ENCODE measurements at regions of chr2 and their contacts with region 1.

Region 1: GRCh38 chr2:217785544-217786045 is 217.2 kb downstream of the TNS1 start:
- DNase-seq: peak; percentile 53 to 96
- H3K4me3 ChIP-seq: no peak overlapping the region
- H3K27ac ChIP-seq: no peak overlapping the region
- H3K4me1 ChIP-seq: peaks cover 0 to 2% (median 0%) of the 10 kb centered on the region in 4 experiments; a peak in 1 of 7 replicates
- H3K27me3 ChIP-seq: no peaks in the 10 kb centered on the region; a peak in 1 of 7 replicates
- CTCF ChIP-seq: peak; percentile 93 to 98 (median 96)
- EP300 ChIP-seq: no peak
- POLR2A ChIP-seq: no peak
- RAD21 ChIP-seq: peak; percentile 98 to 100

Region 2: GRCh38 chr2:217822296-217823252 is 37.0 kb after region 1 on chr2:
- CTCF ChIA-PET with region 1: interaction called, 155 read pairs
- POLR2A ChIA-PET with region 1: no interaction called
- DNase-seq: no peak
- H3K4me3 ChIP-seq: no peak overlapping the region
- H3K27ac ChIP-seq: no peak overlapping the region
- H3K4me1 ChIP-seq: peaks cover 0 to 3% (median under 1%) of the 10 kb centered on the region in 4 experiments; a peak in 1 of 7 replicates
- H3K27me3 ChIP-seq: no peaks in the 10 kb centered on the region
- CTCF ChIP-seq: peak; percentile 36 to 45 (median 40)
- EP300 ChIP-seq: no peak
- POLR2A ChIP-seq: no peak
- RAD21 ChIP-seq: no peak; a peak in 1 of 4 replicates

Region 3: DNA sequence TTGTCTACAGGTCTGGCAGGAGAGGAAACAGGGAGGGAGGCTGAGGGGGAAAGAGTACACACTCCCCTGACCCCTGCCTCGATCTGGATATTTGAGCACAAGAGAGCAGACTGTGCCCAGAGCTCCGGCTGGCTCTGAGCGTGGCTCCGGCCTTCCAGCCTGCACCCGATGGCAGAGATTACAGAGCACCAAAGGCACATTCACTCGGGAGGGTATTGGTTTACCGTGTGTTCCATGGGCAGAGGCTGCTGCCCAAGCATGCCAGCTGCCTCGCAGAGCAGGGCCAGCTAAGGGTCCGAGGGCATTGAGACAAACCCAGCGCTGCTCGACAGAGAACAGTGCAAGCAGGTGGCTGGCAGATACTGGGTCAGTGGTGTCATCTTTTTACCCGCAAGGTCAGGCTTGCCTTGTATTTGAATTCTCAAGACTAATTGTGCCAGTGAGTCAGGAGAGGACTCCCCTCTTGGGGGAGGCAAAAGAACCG is 85.0 kb after region 1 on chr2:
- CTCF ChIA-PET with region 1: interaction called, 759 read pairs
- POLR2A ChIA-PET with region 1: no interaction called
- DNase-seq: no peak
- H3K4me3 ChIP-seq: no peak overlapping the region
- H3K27ac ChIP-seq: no peak overlapping the region
- H3K4me1 ChIP-seq: peaks cover 0 to 5% (median 1%) of the 10 kb centered on the region in 4 experiments; a peak in 4 of 7 replicates
- H3K27me3 ChIP-seq: no peaks in the 10 kb centered on the region
- CTCF ChIP-seq: no peak
- EP300 ChIP-seq: no peak
- POLR2A ChIP-seq: no peak
- RAD21 ChIP-seq: no peak

Region 4: DNA sequence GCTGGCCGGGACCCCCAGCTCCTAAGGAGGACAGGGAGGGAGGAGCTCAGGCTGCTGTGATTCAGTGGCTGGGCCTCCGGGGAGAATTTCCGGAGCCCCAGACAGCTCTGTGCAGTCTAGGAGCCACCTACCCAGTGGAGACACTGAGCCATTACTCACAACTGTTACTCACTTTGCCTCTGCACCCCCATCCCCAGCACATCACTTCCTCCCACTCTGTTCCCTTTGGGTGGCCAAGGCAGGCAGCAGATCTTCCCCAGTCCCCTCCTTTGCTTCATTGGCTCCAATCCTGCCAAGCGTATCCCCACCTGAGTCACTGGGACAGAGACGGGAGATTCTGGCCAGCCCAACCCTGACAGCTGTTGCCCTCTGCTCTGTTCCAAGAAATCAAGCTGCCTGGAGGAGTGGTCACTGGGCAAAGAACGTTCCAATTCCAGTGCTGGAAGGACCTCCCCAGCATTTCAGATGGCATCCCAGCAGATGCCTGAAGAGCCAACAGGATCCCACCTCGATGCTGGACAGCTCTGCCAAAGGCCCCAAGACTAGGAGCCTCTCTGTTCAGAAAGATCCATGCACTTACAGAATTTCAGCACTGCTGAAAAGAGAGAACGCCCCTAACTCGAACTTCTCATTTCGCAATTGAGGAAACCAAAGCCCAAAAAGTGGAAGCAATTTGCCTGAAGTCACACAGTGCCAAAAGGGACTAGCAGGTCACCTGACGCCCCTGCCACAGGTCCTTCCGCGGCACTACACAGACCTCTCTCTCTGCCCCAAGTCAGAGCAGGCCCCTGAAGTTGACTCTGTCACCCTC is 148.9 kb after region 1 on chr2:
- CTCF ChIA-PET with region 1: interaction called, 15 read pairs
- POLR2A ChIA-PET with region 1: no interaction called
- DNase-seq: no peak
- H3K4me3 ChIP-seq: no peak overlapping the region
- H3K27ac ChIP-seq: 0 out of 2 replicates have a peak overlapping the region, but pooled peaks have one; percentile 33
- H3K4me1 ChIP-seq: peaks cover 11 to 37% (median 23%) of the 10 kb centered on the region in 4 experiments
- H3K27me3 ChIP-seq: no peaks in the 10 kb centered on the region; a peak in 1 of 7 replicates
- CTCF ChIP-seq: no peak
- EP300 ChIP-seq: no peak
- POLR2A ChIP-seq: no peak
- RAD21 ChIP-seq: no peak

Region 5: GRCh38 chr2:217988014-217988839 is 202.6 kb after region 1 on chr2:
- CTCF ChIA-PET with region 1: interaction called, 353 read pairs
- POLR2A ChIA-PET with region 1: interaction called, 4 read pairs
- DNase-seq: peak; percentile 81 to 97
- H3K4me3 ChIP-seq: peak overlapping the region in 3 of 4 experiments; percentile 6 to 51 (median 15); a peak in 2 of 8 replicates
- H3K27ac ChIP-seq: peak overlapping the region; percentile 63; the same call in 1 of the 2 replicates
- H3K4me1 ChIP-seq: peaks cover 0 to 12% (median 2%) of the 10 kb centered on the region in 4 experiments; a peak in 4 of 7 replicates
- H3K27me3 ChIP-seq: no peaks in the 10 kb centered on the region; a peak in 1 of 7 replicates
- CTCF ChIP-seq: peak in 2 of 3 experiments; percentile 90 to 92; a peak in 3 of 4 replicates
- EP300 ChIP-seq: peak in 1 of 2 experiments; percentile 91; a peak in 2 of 3 replicates
- POLR2A ChIP-seq: peak in 1 of 2 experiments; percentile 33; a peak in 1 of 3 replicates
- RAD21 ChIP-seq: peak; percentile 94 to 97

Region 6: GRCh38 chr2:218066926-218067515 is 281.4 kb after region 1 on chr2:
- CTCF ChIA-PET with region 1: interaction called, 18 read pairs
- POLR2A ChIA-PET with region 1: no interaction called
- DNase-seq: no peak
- H3K4me3 ChIP-seq: no peak overlapping the region
- H3K27ac ChIP-seq: no peak overlapping the region
- H3K4me1 ChIP-seq: peaks cover 0 to 16% (median 8%) of the 10 kb centered on the region in 4 experiments; a peak in 6 of 7 replicates
- H3K27me3 ChIP-seq: peaks cover 0 to 5% (median 3%) of the 10 kb centered on the region in 4 experiments; a peak in 4 of 7 replicates
- CTCF ChIP-seq: no peak
- EP300 ChIP-seq: no peak
- POLR2A ChIP-seq: no peak
- RAD21 ChIP-seq: no peak

Measured in H1 (cell line).